Prostate gland (tissue), 2 donors: ENCODE measurements at regions of chr4 and their contacts with region 1.

Region 1: DNA sequence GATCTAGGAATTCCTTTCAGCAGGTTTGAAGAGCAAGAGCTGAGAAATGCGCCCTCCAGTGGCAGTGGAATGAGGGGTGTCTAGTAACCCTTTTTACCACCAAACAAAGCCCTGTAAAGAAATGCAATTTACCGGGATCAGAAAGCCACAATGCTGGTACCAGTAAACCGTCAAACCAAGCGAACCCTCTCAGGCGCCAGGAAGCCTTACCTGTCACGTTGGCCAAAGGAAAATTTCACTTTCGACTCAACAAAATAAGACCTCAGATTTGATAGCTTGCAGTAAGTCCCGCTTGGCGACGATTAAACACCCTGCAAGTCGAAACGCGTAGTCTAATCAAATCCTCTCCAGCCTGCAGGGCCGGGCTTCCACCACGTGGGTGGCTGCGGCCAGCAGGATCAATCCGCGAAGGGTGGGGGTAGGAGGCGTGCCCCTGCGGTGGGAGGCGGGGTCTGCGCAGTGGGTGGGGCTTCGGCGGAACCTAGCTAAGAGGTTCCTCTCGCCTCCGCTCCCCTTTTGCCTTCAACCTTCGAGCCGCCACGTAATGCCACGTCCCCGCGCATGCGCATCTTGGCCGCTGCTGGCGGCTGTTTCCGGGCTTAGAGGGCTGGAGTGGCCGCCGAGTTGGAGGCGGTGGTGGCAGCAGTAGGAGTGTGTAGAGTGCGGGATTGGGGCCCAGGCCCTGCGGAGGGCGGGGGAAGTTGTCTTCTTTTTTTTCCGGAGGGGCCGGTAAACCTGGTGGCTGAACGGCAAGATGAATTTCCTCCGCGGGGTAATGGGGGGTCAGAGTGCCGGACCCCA is at the start of gene USO1:
- DNase-seq: peak; percentile 99
- H3K4me3 ChIP-seq: peak within 1 kb of the TSS; percentile 62 to 84
- H3K27ac ChIP-seq: peak within 1 kb of the TSS; percentile 93 to 95
- H3K4me1 ChIP-seq: peaks cover 2% of the 10 kb centered on the region
- H3K27me3 ChIP-seq: no peaks in the 10 kb centered on the region
- CTCF ChIP-seq: peak; percentile 44 to 79 (median 68)
- POLR2A ChIP-seq: peak; percentile 96
- total RNA-seq, gene USO1: 52.0 to 53.3 TPM

Region 2: DNA sequence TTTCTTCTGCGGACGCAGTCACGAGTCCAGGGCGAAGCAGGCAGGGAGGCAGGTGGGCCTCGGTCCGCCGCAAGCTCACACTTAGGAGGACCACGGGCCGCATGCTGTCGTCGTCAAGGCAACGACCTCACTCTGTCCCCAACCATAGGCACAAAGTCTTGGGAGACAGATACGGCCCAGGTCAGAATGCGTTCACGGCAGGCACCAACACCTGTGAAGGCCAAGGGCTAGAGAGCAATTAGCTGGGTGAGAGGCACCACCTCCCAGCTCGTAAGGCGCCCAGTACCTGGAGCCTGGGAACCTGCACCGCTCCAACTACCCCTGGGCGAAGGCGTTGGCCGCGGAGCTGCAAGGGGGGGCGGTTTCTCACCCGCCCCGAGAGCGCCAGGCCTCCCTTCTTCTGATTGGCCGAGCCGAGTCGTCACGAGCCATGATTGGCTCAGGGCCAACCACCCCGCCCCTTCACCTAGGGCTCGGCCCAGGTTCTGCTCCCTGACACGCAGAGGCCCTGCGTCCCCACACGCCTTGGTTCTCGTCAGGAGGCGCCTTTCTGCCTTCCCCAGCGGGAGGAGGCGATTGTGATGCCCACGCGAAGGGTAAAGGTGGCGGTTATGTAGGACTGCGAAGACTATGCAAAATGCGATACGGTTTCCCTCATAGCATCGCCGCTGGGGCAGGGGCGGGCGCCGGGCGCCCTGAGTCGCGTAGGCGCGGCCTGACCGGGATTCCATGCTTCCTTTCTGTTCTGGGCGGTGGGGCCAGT is 93.9 kb before region 1 on chr4 and contains the start of gene CDKL2:
- intact Hi-C with region 1: loop called (anchors 5 kb)
- DNase-seq: peak; percentile 61
- H3K4me3 ChIP-seq: peak within 1 kb of the TSS; percentile 33 to 40
- H3K27ac ChIP-seq: no peak within 1 kb of the TSS
- H3K4me1 ChIP-seq: no peaks in the 10 kb centered on the region
- H3K27me3 ChIP-seq: no peaks in the 10 kb centered on the region
- CTCF ChIP-seq: no peak
- POLR2A ChIP-seq: no peak
- total RNA-seq, gene CDKL2: 2.7 TPM in 1 of 2 donors, not detected in the other

Region 3: GRCh38 chr4:75673027-75673958 is 51.0 kb before region 1 on chr4 and contains the start of gene G3BP2:
- intact Hi-C with region 1: loop called (anchors 1 kb)
- DNase-seq: peak; percentile 97
- H3K4me3 ChIP-seq: peak within 1 kb of the TSS; percentile 80
- H3K27ac ChIP-seq: peak within 1 kb of the TSS; percentile 95 to 97
- H3K4me1 ChIP-seq: peaks cover 4% of the 10 kb centered on the region
- H3K27me3 ChIP-seq: no peaks in the 10 kb centered on the region
- CTCF ChIP-seq: peak in 1 of 4 experiments; percentile 3
- POLR2A ChIP-seq: peak; percentile 92
- total RNA-seq, gene G3BP2: 95.0 to 121 TPM

Region 4: GRCh38 chr4:75769036-75769435 is 44.8 kb after region 1 on chr4:
- intact Hi-C with region 1: no loop called
- DNase-seq: no peak
- H3K4me3 ChIP-seq: no peak overlapping the region
- H3K27ac ChIP-seq: no peak overlapping the region
- H3K4me1 ChIP-seq: no peaks in the 10 kb centered on the region
- H3K27me3 ChIP-seq: no peaks in the 10 kb centered on the region
- CTCF ChIP-seq: no peak
- POLR2A ChIP-seq: no peak

Region 5: DNA sequence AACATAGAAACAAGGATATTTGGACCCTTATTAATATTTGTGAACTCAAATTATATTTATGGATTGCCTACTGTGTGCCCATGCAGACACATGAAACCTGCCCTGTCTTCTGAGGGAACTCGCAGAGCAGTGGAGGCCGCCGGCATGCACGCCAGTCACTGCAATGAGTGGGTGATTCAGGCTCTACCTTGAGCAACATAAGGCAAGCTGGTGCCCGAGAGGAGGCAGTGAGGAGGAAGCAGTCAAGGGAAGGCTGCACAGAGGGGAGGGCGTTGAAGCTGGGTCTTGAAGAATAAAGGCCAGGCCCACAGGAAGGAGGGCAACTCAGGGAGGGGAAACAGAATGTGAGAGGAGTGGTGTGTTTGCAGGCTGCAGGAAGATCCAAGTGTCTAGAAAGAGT is 125.2 kb after region 1 on chr4:
- intact Hi-C with region 1: loop called (anchors 5 kb)
- DNase-seq: no peak
- H3K4me3 ChIP-seq: no peak overlapping the region
- H3K27ac ChIP-seq: no peak overlapping the region
- H3K4me1 ChIP-seq: no peaks in the 10 kb centered on the region
- H3K27me3 ChIP-seq: no peaks in the 10 kb centered on the region
- CTCF ChIP-seq: no peak
- POLR2A ChIP-seq: no peak

Region 6: GRCh38 chr4:76074468-76074867 is 350.2 kb after region 1 on chr4 and contains the start of gene ART3:
- intact Hi-C with region 1: no loop called
- DNase-seq: no peak
- H3K4me3 ChIP-seq: no peak within 1 kb of the TSS
- H3K27ac ChIP-seq: no peak within 1 kb of the TSS
- H3K4me1 ChIP-seq: no peaks in the 10 kb centered on the region
- H3K27me3 ChIP-seq: no peaks in the 10 kb centered on the region
- CTCF ChIP-seq: no peak
- POLR2A ChIP-seq: no peak
- total RNA-seq, gene ART3: 3.8 to 24.8 TPM